Activated B cell treated with CpG ODN at 0.5 μM for 24 hours (primary cell): ENCODE measurements at regions of chr15 and their contacts with region 1.

Region 1: DNA sequence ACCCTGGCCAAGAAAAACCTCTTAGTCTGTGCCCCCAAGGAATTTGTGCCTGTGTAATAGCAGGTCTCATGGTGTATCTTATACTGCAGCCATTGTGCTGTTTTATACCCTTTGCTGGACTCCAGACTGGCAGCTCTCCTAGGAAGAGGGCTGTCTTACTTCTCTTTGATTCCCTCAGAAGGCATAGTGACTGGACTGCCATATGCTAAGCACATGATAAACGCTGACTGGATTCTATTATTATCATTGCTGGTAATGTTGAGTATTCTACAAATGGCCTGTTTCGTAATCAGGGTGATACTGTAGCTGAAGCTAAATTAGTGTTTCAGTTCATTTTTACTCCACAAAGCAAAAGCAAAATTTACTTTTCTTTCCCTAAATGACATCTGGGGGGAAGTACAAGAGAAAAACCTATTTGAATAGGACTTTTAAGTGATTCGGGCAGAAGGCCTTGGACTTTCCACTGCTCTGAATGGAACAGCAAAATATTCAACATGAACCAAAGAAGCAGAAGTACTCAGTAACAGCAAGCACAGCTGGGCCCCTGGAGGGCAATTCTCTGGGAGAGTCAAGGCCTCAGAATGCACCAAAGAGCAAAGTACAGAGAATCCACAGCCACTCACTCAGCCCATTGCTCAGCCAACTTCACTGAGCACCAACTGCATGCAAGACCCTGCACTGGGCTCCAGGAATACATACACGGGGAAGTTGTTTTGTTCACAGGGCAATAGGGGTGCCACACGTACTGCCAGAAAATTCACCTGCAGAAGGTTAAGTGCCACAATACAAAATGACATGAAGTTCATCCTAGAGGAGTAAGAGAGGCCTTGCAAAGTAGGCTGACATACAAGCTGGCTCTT is 7.9 kb upstream of the BCL2A1 start:
- DNase-seq: peak; percentile 28
- ATAC-seq: peak; percentile 64
- H3K4me3 Mint-ChIP-seq: peak overlapping the region; percentile 83
- H3K27ac Mint-ChIP-seq: peak overlapping the region; percentile 94
- H3K4me1 Mint-ChIP-seq: peaks cover 78% of the 10 kb centered on the region
- H3K27me3 Mint-ChIP-seq: no peaks in the 10 kb centered on the region
- CTCF ChIP-seq: no peak

Region 2: GRCh38 chr15:79505956-79506355 is 472.9 kb before region 1 on chr15:
- CTCF ChIA-PET with region 1: no interaction called
- POLR2A ChIA-PET with region 1: no interaction called
- intact Hi-C with region 1: no loop called
- DNase-seq: no peak
- ATAC-seq: no peak
- H3K4me3 Mint-ChIP-seq: no peak overlapping the region
- H3K27ac Mint-ChIP-seq: no peak overlapping the region
- H3K4me1 Mint-ChIP-seq: no peaks in the 10 kb centered on the region
- H3K27me3 Mint-ChIP-seq: peaks cover 4% of the 10 kb centered on the region
- CTCF ChIP-seq: no peak

Region 3: DNA sequence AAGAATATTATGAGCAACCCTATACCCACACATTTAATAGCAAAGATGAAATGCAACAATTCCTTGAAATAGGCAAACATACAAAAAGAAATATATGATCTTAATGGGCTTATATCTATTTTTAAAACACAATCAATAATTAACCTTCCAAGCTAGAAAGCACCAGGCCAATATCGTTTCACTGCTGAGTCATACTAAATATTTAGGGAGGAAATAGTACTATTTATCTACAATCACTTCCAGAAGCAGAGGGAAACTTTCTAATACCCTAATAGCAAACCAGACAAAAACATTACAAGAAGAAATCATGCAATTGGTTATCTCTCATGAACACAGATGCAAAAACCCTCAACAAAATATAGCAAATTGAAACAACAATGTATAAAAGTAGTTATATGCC is 289.9 kb before region 1 on chr15:
- CTCF ChIA-PET with region 1: no interaction called
- POLR2A ChIA-PET with region 1: no interaction called
- intact Hi-C with region 1: no loop called
- DNase-seq: no peak
- ATAC-seq: no peak
- H3K4me3 Mint-ChIP-seq: no peak overlapping the region
- H3K27ac Mint-ChIP-seq: no peak overlapping the region
- H3K4me1 Mint-ChIP-seq: no peaks in the 10 kb centered on the region
- H3K27me3 Mint-ChIP-seq: no peaks in the 10 kb centered on the region
- CTCF ChIP-seq: no peak

Region 4: DNA sequence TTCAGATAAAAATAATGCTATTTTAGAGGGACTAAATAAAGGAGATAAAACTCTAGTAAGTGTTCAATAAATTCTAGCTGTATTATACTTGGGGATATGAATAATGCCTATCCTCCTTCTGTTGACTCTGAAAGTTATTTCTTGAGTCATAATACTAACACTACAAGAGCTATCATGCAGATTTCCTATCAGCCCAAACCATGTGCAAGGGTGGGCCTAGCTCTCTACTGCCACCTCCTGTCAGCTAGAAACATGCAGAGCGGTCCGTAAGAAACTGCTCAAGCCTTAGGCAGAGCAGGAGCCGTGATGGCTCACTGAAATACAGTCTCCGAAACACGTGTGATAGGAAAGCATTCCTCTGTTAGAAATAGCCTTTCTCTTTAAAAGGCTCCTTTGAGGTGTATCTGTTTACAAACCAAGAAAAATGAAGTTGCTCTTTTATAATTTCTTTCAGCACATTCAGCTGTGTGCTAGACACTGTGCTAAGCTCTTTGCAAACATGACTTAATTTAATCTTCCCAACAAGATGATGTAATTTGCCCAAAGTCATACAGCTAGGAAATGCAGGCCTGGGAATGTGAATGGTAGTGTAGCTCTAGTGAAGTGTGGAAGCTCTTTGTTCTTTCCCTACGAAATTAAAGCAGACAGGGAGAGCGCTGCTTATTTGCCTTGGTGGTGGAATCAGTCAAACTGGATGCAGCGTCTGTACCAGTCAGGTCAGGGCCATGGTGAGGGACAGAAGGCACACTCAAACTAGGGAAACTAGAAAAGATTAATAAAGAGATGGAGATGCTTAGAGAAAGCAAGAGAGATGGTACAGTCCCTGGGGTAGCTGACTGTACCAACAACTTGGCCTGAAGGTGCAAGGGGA is 125.2 kb before region 1 on chr15:
- CTCF ChIA-PET with region 1: interaction called, 3 read pairs
- POLR2A ChIA-PET with region 1: interaction called, 10 read pairs
- intact Hi-C with region 1: no loop called
- DNase-seq: peak; percentile 20
- ATAC-seq: peak; percentile 99
- H3K4me3 Mint-ChIP-seq: no peak overlapping the region
- H3K27ac Mint-ChIP-seq: no peak overlapping the region
- H3K4me1 Mint-ChIP-seq: peaks cover 23% of the 10 kb centered on the region
- H3K27me3 Mint-ChIP-seq: no peaks in the 10 kb centered on the region
- CTCF ChIP-seq: peak; percentile 76

Region 5: DNA sequence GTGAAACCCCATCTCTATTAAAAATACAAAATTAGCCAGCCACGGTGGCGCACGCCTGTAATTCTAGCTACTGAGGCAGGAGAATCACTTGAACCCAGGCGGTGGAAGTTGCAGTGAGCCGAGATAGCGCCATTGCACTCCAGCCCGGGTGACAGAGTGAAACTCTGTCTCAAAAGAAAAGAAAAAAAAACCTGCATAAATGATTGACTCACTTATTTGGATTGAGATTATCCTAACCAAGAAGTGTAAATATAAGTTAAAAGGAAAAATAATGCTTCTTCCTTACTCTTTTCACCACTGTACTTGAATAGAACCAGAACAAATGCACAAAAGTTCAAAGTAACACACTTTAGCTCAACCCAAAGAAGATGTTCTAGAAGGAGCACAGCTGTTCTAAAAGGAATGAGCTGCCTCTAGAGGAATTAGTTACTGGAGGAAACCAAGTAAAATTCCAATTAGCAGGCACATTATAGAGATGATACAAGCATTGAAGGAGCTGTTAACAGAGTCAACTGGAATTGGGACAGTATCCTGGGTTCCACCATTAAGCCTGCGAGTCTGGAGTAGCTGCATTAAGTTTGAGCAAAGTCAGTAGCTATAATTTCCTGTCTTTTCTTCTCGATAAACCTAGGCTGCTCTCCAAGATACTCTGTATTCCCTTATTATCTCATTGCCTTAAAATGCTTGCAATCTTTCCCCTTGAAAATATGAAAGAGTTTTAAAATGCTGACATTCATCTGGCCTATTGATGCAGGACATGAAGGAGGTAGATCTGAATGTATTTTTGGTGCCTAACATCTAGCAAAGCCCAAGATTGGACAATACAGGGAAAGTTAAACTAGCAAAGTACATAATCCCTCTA is 91.6 kb before region 1 on chr15:
- CTCF ChIA-PET with region 1: no interaction called
- POLR2A ChIA-PET with region 1: no interaction called
- intact Hi-C with region 1: no loop called
- DNase-seq: no peak
- ATAC-seq: no peak
- H3K4me3 Mint-ChIP-seq: no peak overlapping the region
- H3K27ac Mint-ChIP-seq: no peak overlapping the region
- H3K4me1 Mint-ChIP-seq: peaks cover 12% of the 10 kb centered on the region
- H3K27me3 Mint-ChIP-seq: no peaks in the 10 kb centered on the region
- CTCF ChIP-seq: no peak

Region 6: DNA sequence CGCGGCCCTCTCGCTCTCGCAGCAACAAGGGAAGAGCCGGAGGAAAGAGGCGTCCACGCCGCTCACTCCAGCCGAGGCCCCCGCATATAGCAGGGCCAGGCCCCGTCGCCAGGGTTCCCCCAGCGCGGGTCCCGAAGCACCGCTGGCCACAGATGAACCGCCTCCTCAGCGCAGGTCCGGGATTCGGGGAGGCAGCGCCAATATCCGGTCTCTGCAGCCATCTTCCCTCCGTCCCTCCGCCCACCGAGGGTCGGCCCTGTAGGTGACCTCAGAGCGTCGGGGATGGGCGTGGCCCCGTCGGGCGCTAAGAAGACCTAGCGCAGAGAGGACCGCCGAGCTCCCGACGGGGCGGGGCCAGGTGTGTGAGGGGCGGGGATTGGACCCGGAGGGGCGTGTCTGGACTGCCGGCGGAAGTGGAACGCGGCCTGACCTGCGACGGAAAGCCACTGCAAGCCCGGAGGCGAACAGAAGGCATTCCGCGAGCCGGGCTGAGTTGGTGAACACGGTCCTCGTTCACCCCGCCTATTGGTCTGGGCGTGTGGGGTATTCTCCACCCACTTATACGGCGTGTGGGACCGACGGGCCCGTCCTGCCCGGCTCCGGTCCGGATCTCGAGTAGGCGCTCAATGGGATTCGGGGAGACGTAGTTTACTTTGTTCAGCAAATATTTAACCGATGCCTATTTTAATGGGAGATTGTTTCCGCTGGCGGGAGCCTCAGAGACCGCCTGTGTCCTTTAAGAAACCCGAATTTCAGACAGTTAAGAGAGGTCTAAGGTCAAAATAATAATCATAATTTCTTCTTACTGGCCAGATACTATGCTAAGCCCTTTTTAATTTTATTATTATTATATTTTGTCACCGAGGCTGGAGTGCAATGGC is 55.1 kb before region 1 on chr15:
- CTCF ChIA-PET with region 1: interaction called, 5 read pairs
- POLR2A ChIA-PET with region 1: interaction called, 66 read pairs
- intact Hi-C with region 1: loop called (anchors 1 kb)
- DNase-seq: peak; percentile 100
- ATAC-seq: peak; percentile 94
- H3K4me3 Mint-ChIP-seq: peak overlapping the region; percentile 93
- H3K27ac Mint-ChIP-seq: peak overlapping the region; percentile 94
- H3K4me1 Mint-ChIP-seq: peaks cover 26% of the 10 kb centered on the region
- H3K27me3 Mint-ChIP-seq: no peaks in the 10 kb centered on the region
- CTCF ChIP-seq: no peak

Region 7: DNA sequence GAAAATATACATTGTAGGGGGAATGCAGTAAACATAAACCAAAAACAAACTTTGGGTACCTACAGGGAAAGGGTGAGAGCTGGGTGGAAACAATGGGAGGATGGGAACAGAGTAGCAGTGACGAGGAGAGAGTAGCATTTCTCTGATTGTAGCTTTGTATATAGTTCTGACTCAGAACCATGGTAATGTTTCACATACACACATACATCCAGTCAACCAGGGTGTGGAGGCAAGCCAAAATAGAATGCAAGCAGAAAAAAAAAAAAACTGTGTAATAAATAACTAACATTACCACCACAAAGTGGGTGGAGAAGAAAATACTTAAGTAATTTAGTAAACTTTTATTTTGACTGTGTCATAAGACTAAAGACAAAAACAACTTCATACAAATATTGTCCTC is 35.1 kb before region 1 on chr15:
- CTCF ChIA-PET with region 1: no interaction called
- POLR2A ChIA-PET with region 1: no interaction called
- intact Hi-C with region 1: no loop called
- DNase-seq: no peak
- ATAC-seq: no peak
- H3K4me3 Mint-ChIP-seq: no peak overlapping the region
- H3K27ac Mint-ChIP-seq: no peak overlapping the region
- H3K4me1 Mint-ChIP-seq: peaks cover 9% of the 10 kb centered on the region
- H3K27me3 Mint-ChIP-seq: no peaks in the 10 kb centered on the region
- CTCF ChIP-seq: no peak

Region 8: DNA sequence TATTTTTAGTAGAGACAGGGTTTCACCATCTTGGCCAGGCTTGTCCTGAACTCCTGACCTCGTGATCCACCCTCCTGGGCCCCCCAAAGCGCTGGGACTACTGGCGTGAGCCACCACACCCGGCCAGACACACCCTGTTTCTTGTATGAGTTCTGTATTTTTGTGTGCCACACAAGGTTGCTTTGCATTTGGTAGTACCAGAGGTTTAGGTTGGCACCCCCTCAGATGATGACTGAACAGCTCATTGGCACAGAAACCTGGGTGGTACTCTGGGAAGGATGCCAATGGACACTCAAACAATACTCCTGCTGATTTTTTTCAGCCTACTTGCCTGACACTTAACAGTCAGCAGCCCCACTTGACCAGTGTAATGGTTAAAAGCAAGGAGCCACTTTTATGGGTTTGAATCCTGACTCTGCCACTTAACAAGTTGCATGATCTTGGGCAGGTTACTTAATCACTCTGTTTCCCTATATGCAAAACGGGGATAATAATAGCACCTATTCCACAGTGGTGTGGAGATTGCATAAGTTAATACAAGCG is 31.3 kb after region 1 on chr15:
- CTCF ChIA-PET with region 1: no interaction called
- POLR2A ChIA-PET with region 1: interaction called, 11 read pairs
- intact Hi-C with region 1: loop called (anchors 2 kb)
- DNase-seq: no peak
- ATAC-seq: peak; percentile 56
- H3K4me3 Mint-ChIP-seq: peak overlapping the region; percentile 57
- H3K27ac Mint-ChIP-seq: peak overlapping the region; percentile 87
- H3K4me1 Mint-ChIP-seq: peaks cover 73% of the 10 kb centered on the region
- H3K27me3 Mint-ChIP-seq: no peaks in the 10 kb centered on the region
- CTCF ChIP-seq: no peak

Region 9: DNA sequence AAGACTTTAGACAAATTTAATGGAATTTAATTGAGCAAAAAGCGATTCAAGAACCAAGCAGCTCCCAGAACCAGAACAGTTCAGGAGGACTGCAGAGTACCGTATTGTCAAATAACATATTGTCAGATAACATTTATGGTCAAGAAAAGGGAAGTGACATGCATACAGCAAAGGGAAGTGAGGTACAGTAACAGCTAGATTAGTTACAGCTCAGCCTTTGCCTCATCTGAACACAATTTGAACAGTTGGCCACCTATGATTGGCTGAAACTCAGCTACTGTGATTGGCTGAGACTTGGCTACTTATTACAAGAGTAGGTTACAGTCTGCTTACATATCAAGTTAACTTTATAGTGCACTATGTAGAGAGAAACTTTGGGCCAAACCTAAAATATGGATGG is 102.5 kb after region 1 on chr15:
- CTCF ChIA-PET with region 1: no interaction called
- POLR2A ChIA-PET with region 1: interaction called, 11 read pairs
- intact Hi-C with region 1: no loop called
- DNase-seq: no peak
- ATAC-seq: peak; percentile 96
- H3K4me3 Mint-ChIP-seq: no peak overlapping the region
- H3K27ac Mint-ChIP-seq: peak overlapping the region; percentile 16
- H3K4me1 Mint-ChIP-seq: peaks cover 53% of the 10 kb centered on the region
- H3K27me3 Mint-ChIP-seq: no peaks in the 10 kb centered on the region
- CTCF ChIP-seq: no peak